Activated CD4-positive, alpha-beta memory T cell treated with anti-CD3 and anti-CD28 coated beads for 36 hours (primary cell): ENCODE measurements at regions of chr1 and their contacts with region 1.

Region 1: GRCh38 chr1:205658943-205659581 is 21.2 kb downstream of the SLC45A3 start:
- DNase-seq: peak; percentile 85
- H3K4me3 Mint-ChIP-seq: no peak overlapping the region
- H3K27ac Mint-ChIP-seq: no peak overlapping the region
- H3K4me1 Mint-ChIP-seq: no peaks in the 10 kb centered on the region
- H3K27me3 Mint-ChIP-seq: peaks cover 2% of the 10 kb centered on the region

Region 2: DNA sequence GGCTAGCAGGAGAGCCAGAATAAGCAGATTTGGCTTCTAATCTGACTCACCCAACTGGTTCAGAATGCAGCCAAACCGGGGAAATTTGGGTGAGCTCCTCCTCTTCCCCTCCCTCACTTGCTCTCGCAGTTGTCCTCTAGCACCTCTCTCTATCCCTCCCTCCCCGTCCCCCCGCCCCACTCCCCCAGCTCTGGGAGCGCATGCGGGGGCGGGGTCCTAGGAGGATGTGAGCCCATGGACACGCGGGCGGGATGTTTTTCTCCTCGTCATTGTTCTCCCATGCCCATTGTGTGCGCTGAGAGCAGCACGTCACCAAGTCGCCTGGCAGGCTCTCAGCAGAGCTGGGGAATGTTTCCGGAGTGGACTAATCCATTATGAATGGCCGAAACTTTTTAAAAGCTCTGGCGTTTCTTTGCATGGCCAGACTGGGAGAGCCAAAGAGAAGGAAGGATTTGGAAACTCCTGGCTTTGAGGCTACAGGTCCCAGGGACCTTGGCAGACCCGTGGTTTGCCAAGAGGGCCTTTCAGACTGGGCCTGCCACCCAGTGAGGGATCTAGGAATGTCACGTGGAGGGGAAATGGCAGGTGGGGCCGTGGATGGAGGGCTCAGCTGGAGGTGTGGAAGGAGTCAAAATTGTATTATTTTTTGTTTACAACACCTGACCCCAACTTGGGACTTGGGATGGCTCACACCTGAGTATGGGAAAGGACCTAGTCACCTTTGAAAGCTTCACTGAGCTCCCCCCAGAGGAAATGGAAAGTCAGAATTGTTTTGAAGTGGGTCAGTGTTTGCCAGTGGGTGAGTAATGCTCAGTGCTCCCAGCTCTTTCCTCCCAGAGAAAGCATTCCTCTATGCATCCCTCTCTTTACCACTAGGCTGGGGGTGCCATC is 115.4 kb before region 1 on chr1:
- CTCF ChIA-PET with region 1: interaction called, 15 read pairs
- POLR2A ChIA-PET with region 1: no interaction called
- intact Hi-C with region 1: no loop called
- DNase-seq: peak; percentile 64
- H3K4me3 Mint-ChIP-seq: peak overlapping the region; percentile 16
- H3K27ac Mint-ChIP-seq: no peak overlapping the region
- H3K4me1 Mint-ChIP-seq: peaks cover 5% of the 10 kb centered on the region
- H3K27me3 Mint-ChIP-seq: peaks cover 37% of the 10 kb centered on the region

Region 3: GRCh38 chr1:205600085-205600484 is 59.0 kb before region 1 on chr1:
- CTCF ChIA-PET with region 1: interaction called, 631 read pairs
- POLR2A ChIA-PET with region 1: no interaction called
- intact Hi-C with region 1: no loop called
- DNase-seq: peak; percentile 36
- H3K4me3 Mint-ChIP-seq: no peak overlapping the region
- H3K27ac Mint-ChIP-seq: peak overlapping the region; percentile 77
- H3K4me1 Mint-ChIP-seq: peaks cover 31% of the 10 kb centered on the region
- H3K27me3 Mint-ChIP-seq: no peaks in the 10 kb centered on the region

Region 4: DNA sequence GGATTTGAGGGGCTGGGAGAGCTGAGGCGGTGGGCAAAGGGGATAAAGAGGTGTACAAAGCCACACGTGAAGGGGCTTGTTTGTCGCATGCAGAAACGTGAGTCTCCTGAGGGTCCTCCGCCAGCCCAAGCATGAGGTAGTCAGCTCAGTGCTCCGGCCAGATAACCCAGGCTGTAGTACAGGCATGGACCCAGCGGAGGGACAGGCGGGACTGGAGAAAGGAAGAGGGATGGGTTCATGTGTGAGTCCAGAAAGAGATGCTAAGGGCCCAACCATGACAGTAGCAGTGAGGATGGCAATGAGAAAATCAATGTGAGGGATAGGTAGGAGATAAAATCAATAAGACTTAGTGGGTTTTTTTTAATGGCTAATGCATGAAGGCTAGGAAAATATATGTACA is 13.5 kb before region 1 on chr1:
- CTCF ChIA-PET with region 1: interaction called, 41 read pairs
- POLR2A ChIA-PET with region 1: interaction called, 3 read pairs
- intact Hi-C with region 1: no loop called
- DNase-seq: no peak
- H3K4me3 Mint-ChIP-seq: no peak overlapping the region
- H3K27ac Mint-ChIP-seq: no peak overlapping the region
- H3K4me1 Mint-ChIP-seq: no peaks in the 10 kb centered on the region
- H3K27me3 Mint-ChIP-seq: peaks cover 4% of the 10 kb centered on the region

Region 5: DNA sequence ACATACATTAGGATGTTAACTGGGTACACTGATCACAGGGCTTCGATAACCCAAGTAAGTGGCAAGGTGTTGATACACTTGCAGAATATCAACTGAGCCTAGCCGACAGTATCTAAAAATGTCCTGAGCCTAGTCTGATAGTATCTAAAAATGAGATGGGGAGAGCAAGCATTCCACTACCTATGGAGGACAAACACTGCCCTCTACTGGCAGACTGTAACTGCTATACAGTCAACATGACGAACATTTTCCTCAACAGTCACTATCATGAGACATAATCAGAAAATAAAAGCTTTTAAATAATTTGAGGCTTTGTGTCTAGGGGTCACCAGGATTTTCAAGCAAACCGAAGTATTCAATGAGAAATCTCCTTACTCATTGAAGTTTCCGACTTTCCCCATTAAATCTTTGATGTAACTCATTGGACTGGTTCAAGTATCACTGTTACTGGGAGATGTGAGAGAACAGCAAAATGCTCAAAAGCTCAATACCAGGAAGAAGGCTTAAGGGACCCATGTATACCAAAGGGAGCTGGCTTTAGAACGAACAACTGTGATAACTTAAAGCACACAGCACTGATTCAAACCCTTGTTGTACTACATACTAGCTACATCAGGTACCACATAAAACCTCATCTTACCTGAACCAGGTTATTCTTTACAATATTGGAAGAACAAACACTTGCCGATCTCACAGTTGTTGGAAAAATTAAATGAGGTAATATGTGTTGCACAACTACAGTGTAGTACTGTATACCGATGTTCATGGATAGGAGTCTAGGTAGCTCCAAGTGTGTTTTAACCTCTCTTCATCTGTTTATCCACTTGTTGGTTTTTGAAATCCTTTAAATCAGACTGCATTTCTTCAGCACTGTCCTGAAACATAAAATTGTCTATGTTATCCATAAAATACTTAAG is 52.3 kb after region 1 on chr1:
- CTCF ChIA-PET with region 1: interaction called, 317 read pairs
- POLR2A ChIA-PET with region 1: no interaction called
- intact Hi-C with region 1: loop called (anchors 1 kb)
- DNase-seq: peak; percentile 57
- H3K4me3 Mint-ChIP-seq: no peak overlapping the region
- H3K27ac Mint-ChIP-seq: peak overlapping the region; percentile 50
- H3K4me1 Mint-ChIP-seq: peaks cover 9% of the 10 kb centered on the region
- H3K27me3 Mint-ChIP-seq: no peaks in the 10 kb centered on the region

Region 6: GRCh38 chr1:205907794-205908193 is 248.7 kb after region 1 on chr1:
- CTCF ChIA-PET with region 1: interaction called, 15 read pairs
- POLR2A ChIA-PET with region 1: no interaction called
- intact Hi-C with region 1: no loop called
- DNase-seq: no peak
- H3K4me3 Mint-ChIP-seq: no peak overlapping the region
- H3K27ac Mint-ChIP-seq: no peak overlapping the region
- H3K4me1 Mint-ChIP-seq: no peaks in the 10 kb centered on the region
- H3K27me3 Mint-ChIP-seq: no peaks in the 10 kb centered on the region

Region 7: DNA sequence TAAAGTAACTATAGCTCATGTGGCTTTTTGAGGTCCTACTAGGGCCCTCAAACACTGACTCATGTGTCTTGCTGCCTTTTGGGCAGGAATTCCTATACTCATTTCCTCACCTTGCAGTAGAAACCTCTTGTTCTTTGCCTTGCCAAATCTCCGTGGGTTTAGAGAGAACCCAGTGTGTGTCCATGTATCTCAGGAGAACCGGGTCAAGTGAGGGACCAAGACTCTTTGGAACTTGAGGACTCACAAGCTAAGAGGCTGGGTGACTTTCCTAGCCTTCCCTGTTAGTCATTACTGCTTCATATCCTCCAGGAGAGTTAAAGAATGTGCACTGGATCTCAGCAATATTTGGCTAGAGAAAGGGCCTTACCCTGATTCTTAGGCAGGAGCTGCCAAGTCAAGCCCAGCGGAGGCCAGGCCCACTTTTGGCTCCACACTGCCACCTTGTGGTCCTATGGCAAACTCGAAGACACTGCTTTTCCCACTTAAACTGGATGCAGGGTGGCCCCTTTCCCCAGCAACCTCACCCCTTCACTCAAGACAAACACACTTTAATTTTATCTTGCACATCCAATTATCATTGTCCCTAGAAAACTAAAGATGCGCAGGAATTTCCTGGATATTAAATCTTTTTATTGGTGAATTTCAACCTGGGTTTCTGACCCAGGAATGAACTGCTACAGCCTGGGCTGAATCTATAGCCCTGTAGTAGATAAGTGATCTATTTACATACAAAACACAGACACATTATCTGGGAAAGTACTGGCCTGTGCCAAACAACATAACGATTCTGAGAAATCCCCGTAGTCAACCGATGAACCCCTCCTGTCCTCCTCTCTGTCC is 447.5 kb after region 1 on chr1:
- CTCF ChIA-PET with region 1: interaction called, 23 read pairs
- POLR2A ChIA-PET with region 1: no interaction called
- intact Hi-C with region 1: no loop called
- DNase-seq: peak; percentile 85
- H3K4me3 Mint-ChIP-seq: no peak overlapping the region
- H3K27ac Mint-ChIP-seq: no peak overlapping the region
- H3K4me1 Mint-ChIP-seq: no peaks in the 10 kb centered on the region
- H3K27me3 Mint-ChIP-seq: no peaks in the 10 kb centered on the region